Activated CD4-positive, alpha-beta memory T cell treated with anti-CD3 and anti-CD28 coated beads for 36 hours (primary cell): ENCODE measurements at regions of chr9 and their contacts with region 1.

Region 1: DNA sequence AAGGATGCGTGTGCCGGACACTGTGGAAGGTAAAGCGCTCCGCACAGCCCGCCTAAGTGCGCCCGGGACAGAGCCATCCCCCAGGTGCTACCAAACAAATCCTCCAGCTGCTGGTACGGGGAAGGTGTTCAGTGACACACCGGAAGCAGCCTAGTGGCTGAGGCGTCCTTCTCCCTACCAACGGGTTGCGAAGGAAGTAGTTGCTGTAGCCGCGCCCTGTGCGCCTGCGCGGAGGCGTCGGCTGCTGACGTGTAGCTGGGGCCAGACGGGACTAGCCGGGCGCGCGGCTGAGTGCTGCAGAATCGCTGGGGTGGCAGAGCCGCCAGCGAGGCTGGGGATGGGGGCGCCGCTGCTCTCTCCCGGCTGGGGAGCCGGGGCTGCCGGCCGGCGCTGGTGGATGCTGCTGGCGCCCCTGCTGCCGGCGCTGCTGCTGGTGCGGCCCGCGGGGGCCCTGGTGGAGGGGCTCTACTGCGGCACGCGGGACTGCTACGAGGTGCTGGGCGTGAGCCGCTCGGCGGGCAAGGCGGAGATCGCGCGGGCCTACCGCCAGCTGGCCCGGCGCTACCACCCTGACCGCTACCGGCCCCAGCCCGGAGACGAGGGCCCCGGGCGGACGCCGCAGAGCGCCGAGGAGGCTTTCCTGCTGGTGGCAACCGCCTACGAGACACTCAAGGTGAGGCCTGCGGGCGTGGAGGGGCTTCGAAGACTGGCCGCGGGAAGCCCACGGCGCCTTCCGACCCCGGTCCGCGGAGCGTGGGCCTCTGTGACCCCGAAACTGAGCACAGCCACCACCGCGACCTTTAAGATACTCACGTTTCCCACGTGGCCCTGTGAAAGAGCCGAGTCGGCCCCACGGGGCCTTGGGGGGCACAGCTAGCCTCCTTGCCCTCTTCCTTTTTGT is at the start of gene DNAJC25:
- DNase-seq: peak; percentile 98
- H3K4me3 Mint-ChIP-seq: peak within 1 kb of the TSS; percentile 90
- H3K27ac Mint-ChIP-seq: peak within 1 kb of the TSS; percentile 74
- H3K4me1 Mint-ChIP-seq: peaks cover 43% of the 10 kb centered on the region
- H3K27me3 Mint-ChIP-seq: no peaks in the 10 kb centered on the region
- total RNA-seq, gene DNAJC25: 4.2 to 4.5 TPM

Region 2: GRCh38 chr9:111525056-111525977 is 106.0 kb before region 1 on chr9 and contains the start of gene ZNF483:
- CTCF ChIA-PET with region 1: no interaction called
- POLR2A ChIA-PET with region 1: no interaction called
- intact Hi-C with region 1: loop called (anchors 5 kb)
- DNase-seq: peak; percentile 73
- H3K4me3 Mint-ChIP-seq: peak within 1 kb of the TSS; percentile 88
- H3K27ac Mint-ChIP-seq: peak within 1 kb of the TSS; percentile 72
- H3K4me1 Mint-ChIP-seq: peaks cover 13% of the 10 kb centered on the region
- H3K27me3 Mint-ChIP-seq: no peaks in the 10 kb centered on the region
- total RNA-seq, gene ZNF483: 2.9 to 3.4 TPM

Region 3: DNA sequence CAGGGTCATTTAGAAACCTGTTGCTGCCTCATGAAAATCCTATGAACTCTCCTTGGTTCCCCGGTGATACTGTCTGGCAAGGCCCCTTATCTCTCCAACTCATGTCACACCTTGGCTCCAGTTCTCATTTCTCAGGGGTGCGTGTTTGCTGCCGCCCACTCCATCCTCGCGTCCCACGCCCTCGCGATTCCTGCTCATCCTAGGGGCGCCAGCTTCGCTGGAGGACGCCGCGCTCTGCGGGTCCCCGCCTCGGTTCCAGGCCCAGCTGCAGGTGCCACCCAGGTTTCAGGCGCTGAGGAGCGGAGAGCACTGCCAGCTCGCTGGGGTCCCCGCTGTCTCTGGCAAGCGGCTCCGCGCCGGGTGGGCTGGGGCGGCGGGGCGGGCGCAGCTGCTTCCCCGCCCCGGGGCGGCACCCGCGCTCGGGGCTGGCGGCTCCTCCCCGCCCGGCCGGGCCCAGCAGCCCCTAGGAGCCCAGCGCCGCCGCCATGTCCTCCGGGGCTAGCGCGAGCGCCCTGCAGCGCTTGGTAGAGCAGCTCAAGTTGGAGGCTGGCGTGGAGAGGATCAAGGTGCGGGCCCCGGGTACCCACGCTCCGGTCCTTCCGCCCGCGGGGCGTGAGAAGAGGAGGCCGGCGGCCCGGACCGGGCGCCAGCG is 30.0 kb after region 1 on chr9 and contains the start of gene GNG10:
- CTCF ChIA-PET with region 1: interaction called, 12 read pairs
- POLR2A ChIA-PET with region 1: interaction called, 21 read pairs
- intact Hi-C with region 1: loop called (anchors 1 kb)
- DNase-seq: peak; percentile 75
- H3K4me3 Mint-ChIP-seq: peak within 1 kb of the TSS; percentile 95
- H3K27ac Mint-ChIP-seq: peak within 1 kb of the TSS; percentile 92
- H3K4me1 Mint-ChIP-seq: peaks cover 27% of the 10 kb centered on the region
- H3K27me3 Mint-ChIP-seq: no peaks in the 10 kb centered on the region
- total RNA-seq, gene GNG10: 21.7 to 22.1 TPM

Region 4: DNA sequence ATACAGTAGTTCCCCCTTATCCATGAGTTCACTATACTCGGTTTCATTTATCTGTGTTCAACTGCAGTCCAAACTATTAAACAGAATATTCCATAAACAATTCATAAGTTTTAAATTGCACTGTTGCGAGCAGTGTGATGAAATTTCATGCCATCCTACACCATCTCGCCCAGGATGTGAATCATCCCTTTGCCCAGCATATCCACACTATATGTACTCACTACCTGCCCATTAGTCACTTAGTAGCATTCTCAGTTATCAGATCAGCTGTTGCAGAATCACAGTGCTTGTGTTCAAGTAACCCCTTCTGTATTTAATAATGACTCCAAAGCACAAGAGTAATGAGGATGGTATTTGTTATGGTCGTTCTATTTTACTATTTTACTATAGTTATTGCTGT is 112.0 kb after region 1 on chr9:
- CTCF ChIA-PET with region 1: no interaction called
- POLR2A ChIA-PET with region 1: no interaction called
- intact Hi-C with region 1: loop called (anchors 10 kb)
- DNase-seq: peak; percentile 59
- H3K4me3 Mint-ChIP-seq: no peak overlapping the region
- H3K27ac Mint-ChIP-seq: peak overlapping the region; percentile 80
- H3K4me1 Mint-ChIP-seq: peaks cover 10% of the 10 kb centered on the region
- H3K27me3 Mint-ChIP-seq: no peaks in the 10 kb centered on the region

Region 5: DNA sequence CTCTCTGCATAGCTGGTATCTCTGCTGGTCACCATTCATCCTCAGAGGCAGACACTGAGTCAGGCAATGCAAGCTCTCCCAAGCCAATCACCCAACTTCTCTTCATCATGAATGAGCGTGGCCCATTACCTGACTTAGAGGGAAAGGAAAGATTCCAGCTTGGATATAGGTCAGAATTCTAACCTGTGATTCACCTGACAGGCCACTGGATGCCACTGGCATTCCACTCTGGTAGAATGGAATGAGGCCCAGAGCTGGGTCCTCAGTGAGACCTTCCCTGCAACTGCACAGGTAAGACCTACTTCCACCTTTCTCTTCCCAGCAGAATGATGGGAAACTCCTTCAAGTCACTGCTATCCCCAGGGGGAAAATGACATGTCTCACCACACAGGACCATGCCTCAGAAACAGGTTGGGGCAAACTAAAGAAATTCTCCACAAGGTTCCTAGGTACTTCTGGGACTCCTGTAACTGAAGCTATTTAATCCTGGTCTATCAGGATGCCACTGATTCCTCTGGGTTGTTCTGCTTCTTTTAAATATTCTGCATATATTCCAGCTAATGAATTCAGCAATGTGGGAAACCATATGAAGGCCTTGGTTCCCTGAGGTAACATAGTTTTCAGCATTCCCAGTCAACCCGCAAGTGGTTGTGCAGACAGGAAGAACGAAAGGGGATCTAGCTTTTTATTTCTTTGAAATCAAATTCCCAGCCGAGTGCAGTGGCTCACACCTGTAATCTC is 481.8 kb after region 1 on chr9:
- CTCF ChIA-PET with region 1: no interaction called
- POLR2A ChIA-PET with region 1: no interaction called
- intact Hi-C with region 1: no loop called
- DNase-seq: peak; percentile 25
- H3K4me3 Mint-ChIP-seq: no peak overlapping the region
- H3K27ac Mint-ChIP-seq: no peak overlapping the region
- H3K4me1 Mint-ChIP-seq: no peaks in the 10 kb centered on the region
- H3K27me3 Mint-ChIP-seq: no peaks in the 10 kb centered on the region